ENCODE measurements at regions of chr17 and their contacts with region 1.

Region 1: DNA sequence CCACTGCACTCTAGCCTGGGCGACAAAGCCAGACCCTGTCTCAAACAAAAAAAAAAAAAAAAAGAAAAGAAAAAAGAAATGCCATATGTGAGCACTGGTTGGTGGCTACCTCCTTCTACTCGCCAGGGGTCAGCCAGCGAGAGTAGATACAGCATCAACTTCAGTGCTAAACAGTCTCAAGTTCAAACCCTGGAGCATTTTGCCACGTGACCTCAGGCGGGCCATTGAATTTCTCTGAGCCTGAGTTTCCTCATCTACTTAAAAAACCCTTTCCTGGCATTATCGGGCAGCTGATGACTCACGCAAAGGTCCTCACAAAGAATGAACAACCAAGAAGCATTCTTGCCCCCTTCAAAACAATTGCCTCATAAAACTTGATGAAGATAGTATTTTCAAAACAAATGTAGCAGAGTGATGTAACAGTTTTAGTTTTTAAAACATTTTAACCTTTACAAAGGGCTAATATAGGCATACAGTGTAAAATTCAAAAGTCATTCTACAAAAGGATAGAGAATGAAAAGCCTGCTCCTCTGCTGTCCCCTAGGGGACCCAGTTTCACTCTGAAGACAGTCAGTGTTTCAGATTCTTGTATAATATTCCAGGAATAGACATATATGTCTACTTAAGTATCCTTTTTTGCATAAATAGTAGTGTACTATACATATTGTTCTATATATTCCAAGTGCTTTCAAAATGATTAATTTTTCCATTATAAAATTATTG is 28.4 kb downstream of the DNAH2 start:
- DNase-seq: no peak
- ATAC-seq: no peak
- H3K4me3 ChIP-seq: no peak overlapping the region
- H3K27ac ChIP-seq: no peak overlapping the region
- H3K4me1 ChIP-seq: no peaks in the 10 kb centered on the region
- H3K27me3 ChIP-seq: no peaks in the 10 kb centered on the region
- CTCF ChIP-seq: no peak

Region 2: DNA sequence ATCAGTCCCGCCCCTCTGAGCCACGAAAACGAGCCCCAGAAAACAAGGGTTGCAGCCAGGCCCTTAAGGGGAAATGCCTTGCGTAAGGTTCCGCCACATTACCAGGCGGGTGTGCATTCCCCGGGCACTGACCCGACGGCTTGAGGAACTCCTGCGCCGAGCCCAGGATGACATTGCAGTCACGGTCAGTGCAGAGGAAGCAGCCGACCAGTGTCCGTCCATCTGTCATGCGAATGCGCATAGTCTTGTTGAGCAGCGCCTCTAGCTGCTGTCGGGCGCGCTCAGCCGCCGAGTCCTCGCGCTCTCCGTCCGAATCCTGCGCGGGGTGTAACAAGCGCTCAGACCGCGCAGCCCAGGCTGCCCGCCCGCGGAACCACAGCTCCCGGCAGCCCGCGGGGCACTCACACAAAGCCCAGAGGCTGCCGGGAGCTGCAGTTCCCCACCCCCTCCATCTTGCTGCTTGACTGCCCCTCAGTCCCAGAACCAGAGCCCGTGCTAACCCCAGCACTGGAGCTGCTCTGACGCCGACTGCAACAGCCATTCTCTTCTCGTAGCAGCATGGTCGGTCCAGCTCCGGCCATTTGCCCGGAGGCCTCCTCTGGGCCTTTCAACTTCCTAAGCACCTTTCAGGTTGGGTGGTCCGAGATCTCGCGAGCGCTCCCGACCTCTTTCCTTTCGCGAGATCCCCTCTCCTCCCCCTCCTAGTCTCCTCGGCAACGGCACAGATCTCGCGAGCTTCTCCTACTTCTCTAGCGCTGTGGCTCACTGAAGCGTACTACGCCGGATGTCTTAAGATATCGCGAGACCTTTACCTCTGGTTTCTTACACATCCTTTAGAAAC is 111.2 kb after region 1 on chr17 and contains the start of gene NAA38:
- CTCF ChIA-PET with region 1: interaction called, 10 read pairs
- POLR2A ChIA-PET with region 1: no interaction called
- in situ Hi-C with region 1: no loop called
- intact Hi-C with region 1: loop called (anchors 10 kb)
- DNase-seq: no peak
- ATAC-seq: peak; percentile 92
- H3K4me3 ChIP-seq: peak within 1 kb of the TSS; percentile 74 to 79
- H3K27ac ChIP-seq: peak within 1 kb of the TSS; percentile 97
- H3K4me1 ChIP-seq: peaks cover 8% of the 10 kb centered on the region; the same call in 1 of the 2 replicates
- H3K27me3 ChIP-seq: no peaks in the 10 kb centered on the region
- CTCF ChIP-seq: peak; percentile 54
- total RNA-seq, gene NAA38: 75.2 TPM